ENCODE measurements at regions of chr17 and their contacts with region 1.

Region 1: GRCh38 chr17:75319904-75320691 is 30.9 kb upstream of the SLC25A19 start:
- DNase-seq: no peak
- ATAC-seq: no peak
- H3K4me3 Mint-ChIP-seq: no peak overlapping the region
- H3K27ac Mint-ChIP-seq: peak overlapping the region; percentile 57
- H3K4me1 Mint-ChIP-seq: peaks cover 28% of the 10 kb centered on the region
- H3K27me3 Mint-ChIP-seq: no peaks in the 10 kb centered on the region

Region 2: DNA sequence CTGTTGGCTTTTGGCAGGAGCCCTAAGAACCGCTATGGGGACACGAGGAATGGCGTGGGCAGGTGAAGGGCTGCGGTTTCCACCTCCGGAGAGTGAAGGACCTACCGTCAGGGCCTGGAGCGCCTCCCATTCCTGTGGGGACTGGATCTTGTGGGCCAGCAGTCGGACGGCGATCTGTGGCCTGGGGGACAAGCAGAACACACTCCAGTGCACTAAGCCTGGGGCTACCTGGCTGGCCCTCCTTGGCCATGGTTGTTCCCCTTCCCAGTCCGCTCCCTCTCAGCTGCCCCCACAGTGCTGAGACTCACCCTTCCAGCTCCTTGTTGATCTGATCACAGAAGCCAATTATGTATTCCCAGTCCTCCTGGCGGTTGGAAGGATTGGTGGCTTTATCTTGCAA is 73.7 kb before region 1 on chr17:
- CTCF ChIA-PET with region 1: no interaction called
- POLR2A ChIA-PET with region 1: no interaction called
- DNase-seq: no peak
- ATAC-seq: no peak
- H3K4me3 Mint-ChIP-seq: no peak overlapping the region
- H3K27ac Mint-ChIP-seq: no peak overlapping the region
- H3K4me1 Mint-ChIP-seq: peaks cover 52% of the 10 kb centered on the region
- H3K27me3 Mint-ChIP-seq: no peaks in the 10 kb centered on the region

Region 3: GRCh38 chr17:75309025-75309772 is 10.9 kb before region 1 on chr17:
- CTCF ChIA-PET with region 1: interaction called, 13 read pairs
- POLR2A ChIA-PET with region 1: interaction called, 3 read pairs
- DNase-seq: no peak
- ATAC-seq: no peak
- H3K4me3 Mint-ChIP-seq: no peak overlapping the region
- H3K27ac Mint-ChIP-seq: no peak overlapping the region
- H3K4me1 Mint-ChIP-seq: peaks cover 11% of the 10 kb centered on the region
- H3K27me3 Mint-ChIP-seq: no peaks in the 10 kb centered on the region

Region 4: DNA sequence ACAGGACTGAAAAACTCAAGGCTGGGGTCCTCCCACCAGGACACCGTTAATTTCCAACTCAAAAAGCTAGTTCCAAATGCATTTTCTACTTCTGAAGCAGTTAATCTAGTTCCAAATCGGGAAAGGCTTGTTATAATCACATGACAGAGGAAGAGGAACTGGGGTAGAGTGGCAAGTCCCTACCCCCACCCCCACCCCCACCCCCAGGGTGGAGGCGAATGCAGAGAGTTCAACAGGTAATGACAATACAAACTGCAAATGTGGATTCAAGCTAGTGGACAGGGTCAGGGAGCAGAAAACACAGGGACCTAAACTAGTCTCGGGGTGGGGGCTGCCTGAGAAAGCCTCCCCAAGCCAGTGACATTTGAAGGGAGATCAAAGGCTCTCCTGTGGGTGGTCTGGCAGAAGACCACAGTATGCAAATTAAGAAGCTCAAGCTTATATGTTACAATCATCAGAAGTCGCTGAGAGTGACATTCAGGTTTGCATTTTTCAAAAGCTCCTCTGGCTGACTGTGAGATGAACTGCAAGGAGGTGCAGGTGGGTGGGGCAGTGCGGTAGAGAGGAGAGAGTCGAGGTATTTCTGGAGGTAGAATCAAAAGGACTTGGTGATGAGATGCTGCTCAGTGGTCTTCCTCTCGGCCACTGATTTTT is 25.5 kb after region 1 on chr17:
- CTCF ChIA-PET with region 1: interaction called, 46 read pairs
- POLR2A ChIA-PET with region 1: no interaction called
- DNase-seq: peak; percentile 84
- ATAC-seq: peak; percentile 81
- H3K4me3 Mint-ChIP-seq: peak overlapping the region; percentile 68
- H3K27ac Mint-ChIP-seq: peak overlapping the region; percentile 83
- H3K4me1 Mint-ChIP-seq: peaks cover 90% of the 10 kb centered on the region
- H3K27me3 Mint-ChIP-seq: no peaks in the 10 kb centered on the region

Region 5: GRCh38 chr17:75393523-75394331 is 73.6 kb after region 1 on chr17:
- CTCF ChIA-PET with region 1: interaction called, 69 read pairs
- POLR2A ChIA-PET with region 1: no interaction called
- DNase-seq: peak; percentile 89
- ATAC-seq: peak; percentile 95
- H3K4me3 Mint-ChIP-seq: peak overlapping the region; percentile 89
- H3K27ac Mint-ChIP-seq: peak overlapping the region; percentile 73
- H3K4me1 Mint-ChIP-seq: peaks cover 68% of the 10 kb centered on the region
- H3K27me3 Mint-ChIP-seq: no peaks in the 10 kb centered on the region

Measured in activated CD8-positive, alpha-beta T cell treated with anti-CD3 and anti-CD28 coated beads, Interleukin-2, amount 10 ng/mL, durations not matched to agents 7 days and 5 days (primary cell).